Activated naive CD4-positive, alpha-beta T cell treated with anti-CD3 and anti-CD28 coated beads, Interleukin-2, amount 10 ng/mL, durations not matched to agents 7 days and 5 days (primary cell): ENCODE measurements at regions of chr12 and their contacts with region 1.

Region 1: DNA sequence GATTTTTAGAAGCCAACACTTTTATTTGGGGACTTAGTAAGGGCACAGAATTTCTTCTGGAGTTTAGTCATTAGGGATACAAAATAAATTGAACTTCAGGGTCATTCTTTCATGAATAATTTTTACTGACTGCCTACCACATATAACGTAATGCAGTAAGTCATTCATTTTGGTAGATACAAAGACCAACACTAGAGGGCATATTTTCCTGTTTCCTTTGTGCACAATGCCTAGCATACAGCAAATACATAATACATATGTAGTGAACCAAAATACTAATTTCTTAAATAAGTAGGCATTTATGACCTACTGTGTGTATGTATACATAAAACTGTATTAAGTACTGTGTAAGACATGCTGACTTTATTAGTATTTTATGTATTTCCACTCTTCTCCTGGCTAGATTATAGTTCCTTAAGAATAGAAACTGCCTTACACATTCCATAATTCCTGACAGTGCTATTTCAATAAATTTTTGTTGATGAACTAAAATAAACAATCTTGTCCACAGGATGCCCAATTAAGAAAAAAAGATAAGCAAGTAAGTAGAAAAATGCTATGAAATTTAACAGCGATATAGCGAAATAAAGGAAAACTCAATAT is 47.9 kb downstream of the PPP1R12A start:
- DNase-seq: no peak
- H3K4me3 Mint-ChIP-seq: no peak overlapping the region
- H3K27ac Mint-ChIP-seq: no peak overlapping the region
- H3K4me1 Mint-ChIP-seq: peaks cover 22% of the 10 kb centered on the region
- H3K27me3 Mint-ChIP-seq: no peaks in the 10 kb centered on the region

Region 2: GRCh38 chr12:79591988-79592387 is 295.0 kb before region 1 on chr12:
- CTCF ChIA-PET with region 1: no interaction called
- DNase-seq: no peak
- H3K4me3 Mint-ChIP-seq: no peak overlapping the region
- H3K27ac Mint-ChIP-seq: no peak overlapping the region
- H3K4me1 Mint-ChIP-seq: no peaks in the 10 kb centered on the region
- H3K27me3 Mint-ChIP-seq: no peaks in the 10 kb centered on the region

Region 3: GRCh38 chr12:79858518-79858917 is 28.5 kb before region 1 on chr12:
- CTCF ChIA-PET with region 1: no interaction called
- DNase-seq: no peak
- H3K4me3 Mint-ChIP-seq: no peak overlapping the region
- H3K27ac Mint-ChIP-seq: no peak overlapping the region
- H3K4me1 Mint-ChIP-seq: no peaks in the 10 kb centered on the region
- H3K27me3 Mint-ChIP-seq: no peaks in the 10 kb centered on the region

Region 4: DNA sequence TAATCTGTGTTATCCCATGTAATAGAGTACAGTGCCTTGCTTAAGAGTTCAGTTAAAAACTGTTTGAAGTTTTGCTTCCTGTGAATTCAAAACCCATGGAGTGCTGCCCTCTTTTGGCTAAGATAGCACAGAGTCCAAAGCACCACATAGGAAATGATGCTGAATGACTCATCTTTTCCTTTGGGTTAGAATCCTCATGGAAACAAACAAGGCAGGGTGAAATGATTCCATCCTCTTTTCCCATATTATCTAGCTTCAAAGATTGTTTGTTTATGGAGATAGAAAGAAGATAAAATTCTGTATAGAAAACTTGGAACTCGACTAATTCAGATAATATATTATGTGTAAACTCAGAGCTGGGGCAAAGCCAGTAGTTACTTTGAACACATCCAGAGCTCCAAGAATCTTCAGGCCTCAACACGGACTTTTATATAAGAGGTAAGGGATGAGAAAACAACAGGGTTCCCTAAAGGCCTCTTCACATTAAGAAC is 299.8 kb after region 1 on chr12:
- CTCF ChIA-PET with region 1: interaction called, 23 read pairs
- DNase-seq: peak; percentile 54
- H3K4me3 Mint-ChIP-seq: no peak overlapping the region
- H3K27ac Mint-ChIP-seq: no peak overlapping the region
- H3K4me1 Mint-ChIP-seq: peaks cover 9% of the 10 kb centered on the region
- H3K27me3 Mint-ChIP-seq: no peaks in the 10 kb centered on the region